ENCODE measurements at regions of chr1 and their contacts with region 1.

Region 1: GRCh38 chr1:60848583-60849188 is 233.7 kb upstream of the NFIA start:
- DNase-seq: no peak
- ATAC-seq: no peak

Region 2: DNA sequence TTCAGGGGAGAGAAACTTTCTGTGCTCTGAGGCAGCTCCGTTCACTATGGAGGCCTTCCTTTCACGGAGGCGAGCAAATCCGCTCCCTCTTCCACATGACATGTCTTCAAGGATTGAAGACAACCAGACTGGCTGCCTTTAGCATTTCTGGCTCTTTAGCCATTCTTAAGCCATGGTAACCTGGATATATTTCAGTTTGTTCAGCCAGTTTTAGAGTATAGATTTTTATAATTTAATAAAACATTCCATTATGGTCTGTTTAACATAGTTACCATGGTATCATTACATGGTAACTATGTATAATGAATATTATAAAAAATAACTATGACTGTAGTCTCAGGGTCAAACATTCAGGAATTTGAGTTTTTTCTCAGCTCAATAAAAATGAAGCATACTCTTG is 179.4 kb after region 1 on chr1:
- intact Hi-C with region 1: no loop called
- DNase-seq: no peak
- ATAC-seq: no peak

Region 3: GRCh38 chr1:61043010-61043820 is 194.5 kb after region 1 on chr1:
- intact Hi-C with region 1: loop called (anchors 5 kb)
- DNase-seq: peak; percentile 95
- ATAC-seq: peak; percentile 98

Measured in Right ventricle myocardium superior (tissue), 1 donor.